WTC11 (cell line): ENCODE measurements at regions of chr11 and their contacts with region 1.

Region 1: DNA sequence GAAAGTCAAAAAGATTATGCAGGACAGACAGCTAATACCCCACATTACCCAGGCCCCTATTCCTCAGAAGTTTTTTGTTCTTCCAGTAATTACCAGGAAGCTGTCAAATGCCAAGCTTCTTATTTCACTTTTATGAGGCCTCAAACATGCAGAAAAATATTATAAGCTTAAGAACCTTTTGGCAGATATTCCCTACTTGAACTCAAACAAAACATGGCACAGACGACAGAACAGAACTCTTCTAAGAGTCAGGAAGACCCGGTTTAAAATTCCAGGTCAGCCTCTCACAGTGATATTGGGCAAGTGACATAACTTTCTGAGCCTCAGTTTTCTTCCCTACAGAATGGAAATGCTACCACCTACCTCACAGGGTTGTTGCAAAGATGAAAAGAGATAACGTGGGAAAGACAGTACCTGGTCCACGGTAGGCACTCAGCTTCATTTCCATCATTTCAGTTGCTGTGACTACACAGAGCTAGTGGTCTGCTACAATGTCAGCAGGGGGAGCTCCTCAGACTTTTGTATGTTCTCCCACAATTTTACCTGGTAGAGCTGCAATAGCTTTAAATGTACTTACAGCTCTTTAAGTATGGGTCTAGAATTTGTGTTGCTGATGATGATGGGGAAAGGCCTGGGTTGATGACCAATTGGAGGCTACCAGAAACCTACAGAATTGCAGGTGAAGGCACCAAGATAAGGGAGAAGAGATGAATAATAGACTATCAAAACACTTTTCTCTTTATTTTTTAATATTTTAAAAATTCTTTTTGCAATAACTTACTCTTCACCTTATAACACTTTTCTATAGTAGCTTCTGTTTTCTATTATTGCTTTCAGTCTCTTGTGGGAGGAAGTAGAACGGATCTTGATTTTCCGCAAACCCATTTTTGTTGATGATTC is 98.3 kb upstream of the CHRM4 start:
- DNase-seq: peak; percentile 43
- ATAC-seq: peak; percentile 90
- H3K4me3 Mint-ChIP-seq: no peak overlapping the region
- H3K27ac Mint-ChIP-seq: no peak overlapping the region; the same call in 1 of the 2 replicates
- H3K4me1 Mint-ChIP-seq: peaks cover 7% of the 10 kb centered on the region
- H3K27me3 Mint-ChIP-seq: no peaks in the 10 kb centered on the region
- CTCF ChIP-seq: peak; percentile 41; the same call in 1 of the 2 replicates

Region 2: DNA sequence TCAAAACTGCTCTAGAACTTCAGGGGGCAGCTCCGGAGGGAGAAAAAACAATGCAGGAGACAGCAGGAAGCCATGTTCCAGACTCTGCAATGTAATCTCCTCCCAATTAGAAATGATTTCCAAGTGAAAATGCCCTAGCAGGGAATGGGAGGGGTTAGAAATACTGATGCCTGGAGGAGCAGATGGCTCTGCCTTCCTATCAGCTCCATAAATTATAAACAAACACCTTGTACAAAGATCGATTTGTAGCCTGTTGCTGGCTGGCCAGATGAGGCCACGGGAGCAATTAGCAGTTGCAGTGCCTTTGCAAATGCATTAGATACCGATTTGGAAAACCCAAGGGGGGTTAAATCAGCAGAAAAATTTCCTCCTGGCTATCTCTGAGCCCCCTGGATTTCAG is 51.7 kb before region 1 on chr11:
- CTCF ChIA-PET with region 1: interaction called, 10 read pairs
- POLR2A ChIA-PET with region 1: no interaction called
- DNase-seq: no peak
- ATAC-seq: peak; percentile 35; the same call in 1 of the 2 replicates
- H3K4me3 Mint-ChIP-seq: no peak overlapping the region
- H3K27ac Mint-ChIP-seq: no peak overlapping the region
- H3K4me1 Mint-ChIP-seq: peaks cover 42% of the 10 kb centered on the region
- H3K27me3 Mint-ChIP-seq: peaks cover 31% of the 10 kb centered on the region
- CTCF ChIP-seq: no peak

Region 3: DNA sequence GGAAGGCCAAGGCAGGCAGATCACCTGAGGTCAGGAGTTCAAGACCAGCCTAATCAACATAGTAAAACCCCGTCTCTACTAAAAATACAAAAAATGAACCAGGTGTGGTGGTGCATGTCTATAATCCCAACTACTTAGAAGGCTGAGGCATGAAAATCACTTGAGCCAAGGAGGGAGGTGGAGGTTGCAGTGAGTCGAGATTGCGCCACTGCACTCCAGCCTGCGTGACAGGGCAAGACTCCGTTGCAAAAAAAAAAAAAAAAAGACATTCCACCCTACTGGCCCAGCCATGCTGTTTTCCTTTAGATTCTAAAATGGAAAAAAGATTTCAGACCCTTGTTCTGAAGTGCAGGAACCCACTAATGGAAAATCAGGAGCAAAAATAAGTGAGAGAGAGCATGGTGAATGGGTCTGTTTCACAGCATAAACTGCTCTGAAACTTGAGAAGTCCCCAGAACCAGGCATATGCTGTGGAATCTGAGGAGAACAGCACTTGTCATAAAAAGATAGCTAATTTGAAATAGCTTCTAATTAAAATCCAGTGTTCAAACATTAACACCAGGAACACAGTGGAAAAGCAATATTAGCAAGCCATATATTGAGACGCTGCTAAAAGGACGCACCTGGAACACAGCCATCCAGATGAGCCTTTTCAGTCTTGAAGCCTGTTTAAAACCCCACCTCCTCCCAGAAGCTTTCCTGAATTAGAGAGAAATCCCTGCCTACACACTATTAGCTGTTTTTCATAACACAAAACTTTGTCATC is 32.1 kb before region 1 on chr11:
- CTCF ChIA-PET with region 1: interaction called, 22 read pairs
- POLR2A ChIA-PET with region 1: no interaction called
- DNase-seq: no peak
- ATAC-seq: no peak
- H3K4me3 Mint-ChIP-seq: no peak overlapping the region
- H3K27ac Mint-ChIP-seq: peak overlapping the region; percentile 30; the same call in 1 of the 2 replicates
- H3K4me1 Mint-ChIP-seq: peaks cover 38% of the 10 kb centered on the region
- H3K27me3 Mint-ChIP-seq: no peaks in the 10 kb centered on the region
- CTCF ChIP-seq: no peak

Region 4: DNA sequence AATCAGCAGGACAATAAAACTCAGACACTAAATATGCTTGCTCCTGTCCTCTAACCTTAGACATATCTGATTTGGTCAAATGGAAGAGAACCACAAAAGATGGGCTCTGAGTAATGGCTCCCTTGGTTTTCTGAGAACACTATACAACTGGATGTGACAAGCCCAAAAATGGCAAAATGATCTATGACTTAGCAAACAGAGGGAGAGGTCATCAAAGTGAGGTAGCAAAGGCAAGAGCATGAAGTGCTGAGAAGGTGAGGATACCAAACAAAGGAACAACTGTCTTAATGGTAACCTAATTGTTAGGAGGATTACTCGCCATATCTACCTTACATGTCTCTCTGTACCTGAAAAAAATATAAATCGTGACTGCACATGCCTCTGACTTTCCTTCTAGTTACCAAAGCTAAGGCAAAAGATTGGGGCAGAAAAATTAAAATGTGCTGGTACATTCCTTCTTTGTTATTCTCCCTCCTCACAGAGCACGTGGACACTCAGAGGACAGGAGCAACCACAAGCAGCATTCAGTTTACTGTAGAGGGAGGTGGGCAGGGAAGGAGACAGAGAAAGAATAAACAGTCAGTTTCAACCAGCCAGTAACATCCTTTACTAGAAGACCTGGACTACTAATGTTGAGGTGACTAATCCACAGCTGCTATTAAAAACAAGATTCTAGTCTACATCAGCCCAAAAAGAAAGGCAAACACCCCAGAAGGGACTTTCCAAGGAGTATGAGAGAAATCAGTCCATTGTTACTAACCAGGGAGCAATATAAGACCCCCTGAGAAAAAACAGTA is 15.1 kb after region 1 on chr11:
- CTCF ChIA-PET with region 1: interaction called, 20 read pairs
- POLR2A ChIA-PET with region 1: no interaction called
- DNase-seq: no peak
- ATAC-seq: no peak
- H3K4me3 Mint-ChIP-seq: no peak overlapping the region
- H3K27ac Mint-ChIP-seq: no peak overlapping the region; the same call in 1 of the 2 replicates
- H3K4me1 Mint-ChIP-seq: peaks cover 20% of the 10 kb centered on the region
- H3K27me3 Mint-ChIP-seq: no peaks in the 10 kb centered on the region
- CTCF ChIP-seq: no peak

Region 5: GRCh38 chr11:46521961-46522681 is 32.2 kb after region 1 on chr11:
- CTCF ChIA-PET with region 1: interaction called, 21 read pairs
- POLR2A ChIA-PET with region 1: interaction called, 4 read pairs
- DNase-seq: no peak
- ATAC-seq: no peak
- H3K4me3 Mint-ChIP-seq: no peak overlapping the region
- H3K27ac Mint-ChIP-seq: no peak overlapping the region
- H3K4me1 Mint-ChIP-seq: peaks cover 36% of the 10 kb centered on the region
- H3K27me3 Mint-ChIP-seq: no peaks in the 10 kb centered on the region
- CTCF ChIP-seq: no peak

Region 6: DNA sequence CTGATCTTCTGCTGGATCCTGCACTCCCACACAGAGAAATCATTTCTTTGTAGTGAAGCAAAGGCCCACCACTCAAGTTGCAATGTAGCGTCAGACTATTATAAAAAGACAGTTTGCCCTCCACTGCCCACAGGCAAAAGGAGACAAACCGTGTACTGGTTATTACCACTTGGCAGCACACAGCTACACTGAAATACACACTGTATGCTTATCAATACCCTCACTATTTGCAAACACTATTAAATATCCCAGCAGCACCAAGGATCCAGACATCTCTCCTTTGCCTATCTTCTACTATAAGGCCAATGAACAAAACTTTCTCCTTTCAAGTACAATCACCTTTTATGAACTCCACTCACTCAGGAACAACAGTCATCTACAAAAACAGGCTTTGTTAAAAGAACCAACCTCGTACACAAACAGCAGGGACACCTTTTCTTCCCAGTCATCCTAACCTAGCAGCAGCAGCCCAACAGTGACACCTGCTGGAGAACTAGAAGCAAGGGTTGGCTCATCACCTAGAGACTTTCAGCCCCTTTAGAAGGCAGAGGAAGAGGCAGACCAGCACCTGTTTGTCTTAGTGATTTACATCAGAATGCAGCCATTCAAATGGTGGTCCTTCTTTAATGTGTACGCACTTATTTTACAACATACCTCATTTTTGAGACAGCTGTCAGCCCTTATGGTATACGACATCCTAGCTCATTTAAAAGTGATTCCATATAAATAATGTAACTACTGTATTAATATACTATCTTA is 47.8 kb after region 1 on chr11:
- CTCF ChIA-PET with region 1: interaction called, 11 read pairs
- POLR2A ChIA-PET with region 1: no interaction called
- DNase-seq: peak; percentile 76
- ATAC-seq: peak; percentile 97
- H3K4me3 Mint-ChIP-seq: peak overlapping the region; percentile 31
- H3K27ac Mint-ChIP-seq: peak overlapping the region; percentile 92
- H3K4me1 Mint-ChIP-seq: peaks cover 37% of the 10 kb centered on the region
- H3K27me3 Mint-ChIP-seq: no peaks in the 10 kb centered on the region
- CTCF ChIP-seq: peak; percentile 57